Activated CD8-positive, alpha-beta T cell treated with anti-CD3 and anti-CD28 coated beads for 36 hours (primary cell): ENCODE measurements at regions of chr15 and their contacts with region 1.

Region 1: GRCh38 chr15:25863111-25863967 is at the start of gene ATP10A:
- DNase-seq: peak; percentile 61
- ATAC-seq: peak; percentile 7
- H3K4me3 Mint-ChIP-seq: peak within 1 kb of the TSS; percentile 91
- H3K27ac Mint-ChIP-seq: peak within 1 kb of the TSS; percentile 92
- H3K4me1 Mint-ChIP-seq: peaks cover 23% of the 10 kb centered on the region
- H3K27me3 Mint-ChIP-seq: no peaks in the 10 kb centered on the region
- CTCF ChIP-seq: no peak
- total RNA-seq, gene ATP10A: 17.8 to 21.0 TPM

Region 2: GRCh38 chr15:25783607-25784540 is 79.5 kb before region 1 on chr15:
- CTCF ChIA-PET with region 1: interaction called, 15 read pairs
- POLR2A ChIA-PET with region 1: no interaction called
- intact Hi-C with region 1: no loop called
- DNase-seq: peak; percentile 55
- ATAC-seq: peak; percentile 43
- H3K4me3 Mint-ChIP-seq: no peak overlapping the region
- H3K27ac Mint-ChIP-seq: peak overlapping the region; percentile 74
- H3K4me1 Mint-ChIP-seq: peaks cover 37% of the 10 kb centered on the region
- H3K27me3 Mint-ChIP-seq: no peaks in the 10 kb centered on the region
- CTCF ChIP-seq: peak; percentile 41

Region 3: DNA sequence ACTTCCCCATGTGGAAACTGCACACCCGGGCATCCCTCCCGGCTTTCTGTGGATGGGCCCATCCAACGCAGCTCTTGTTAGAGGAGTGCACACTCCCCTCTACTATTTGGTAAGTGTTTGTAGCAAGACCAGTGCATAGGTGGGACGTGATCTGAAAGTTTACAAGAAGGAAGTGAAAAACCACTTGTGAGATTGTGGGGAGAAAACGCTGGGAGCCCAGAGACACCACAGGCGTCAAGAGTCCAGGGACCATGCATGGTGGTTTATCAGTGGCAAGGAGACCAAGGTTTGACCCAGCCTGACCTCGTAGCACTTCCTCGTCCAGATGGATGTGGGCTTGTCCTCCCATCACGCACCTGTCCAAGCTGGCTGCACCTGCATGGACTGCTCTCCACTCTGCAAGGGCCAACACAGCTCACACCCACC is 51.8 kb before region 1 on chr15:
- CTCF ChIA-PET with region 1: no interaction called
- POLR2A ChIA-PET with region 1: no interaction called
- intact Hi-C with region 1: loop called (anchors 5 kb)
- DNase-seq: peak; percentile 52
- ATAC-seq: peak; percentile 58
- H3K4me3 Mint-ChIP-seq: no peak overlapping the region
- H3K27ac Mint-ChIP-seq: peak overlapping the region; percentile 69
- H3K4me1 Mint-ChIP-seq: peaks cover 61% of the 10 kb centered on the region
- H3K27me3 Mint-ChIP-seq: no peaks in the 10 kb centered on the region
- CTCF ChIP-seq: no peak

Region 4: GRCh38 chr15:25850154-25851111 is 12.9 kb before region 1 on chr15:
- CTCF ChIA-PET with region 1: interaction called, 4 read pairs
- POLR2A ChIA-PET with region 1: interaction called, 26 read pairs
- intact Hi-C with region 1: no loop called
- DNase-seq: peak; percentile 80
- ATAC-seq: peak; percentile 72
- H3K4me3 Mint-ChIP-seq: peak overlapping the region; percentile 75
- H3K27ac Mint-ChIP-seq: peak overlapping the region; percentile 100
- H3K4me1 Mint-ChIP-seq: peaks cover 80% of the 10 kb centered on the region
- H3K27me3 Mint-ChIP-seq: no peaks in the 10 kb centered on the region
- CTCF ChIP-seq: no peak

Region 5: DNA sequence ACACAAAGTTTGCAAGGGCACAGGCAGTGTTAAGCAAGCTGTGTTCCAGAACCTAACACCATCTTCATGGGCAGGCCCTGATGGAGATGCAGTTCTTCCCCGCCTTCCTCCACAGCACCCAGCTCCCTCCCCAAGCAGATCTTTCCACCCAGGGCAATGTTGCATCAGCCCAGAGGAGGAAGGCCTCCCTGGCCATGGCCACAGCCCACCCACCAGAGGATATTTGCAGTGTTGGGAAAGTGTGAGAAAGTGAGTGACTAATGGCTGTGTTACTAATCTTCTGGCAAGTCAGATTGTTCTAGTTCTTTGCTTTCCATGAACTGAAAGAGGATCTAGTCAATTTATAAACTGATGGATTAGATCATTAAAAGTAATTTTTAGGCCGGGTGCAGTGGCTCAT is 41.8 kb after region 1 on chr15:
- CTCF ChIA-PET with region 1: no interaction called
- POLR2A ChIA-PET with region 1: no interaction called
- intact Hi-C with region 1: no loop called
- DNase-seq: peak; percentile 61
- ATAC-seq: peak; percentile 80
- H3K4me3 Mint-ChIP-seq: no peak overlapping the region
- H3K27ac Mint-ChIP-seq: peak overlapping the region; percentile 65
- H3K4me1 Mint-ChIP-seq: peaks cover 22% of the 10 kb centered on the region
- H3K27me3 Mint-ChIP-seq: no peaks in the 10 kb centered on the region
- CTCF ChIP-seq: no peak